K562 (cell line): ENCODE measurements at regions of chr15 and their contacts with region 1.

Region 1: DNA sequence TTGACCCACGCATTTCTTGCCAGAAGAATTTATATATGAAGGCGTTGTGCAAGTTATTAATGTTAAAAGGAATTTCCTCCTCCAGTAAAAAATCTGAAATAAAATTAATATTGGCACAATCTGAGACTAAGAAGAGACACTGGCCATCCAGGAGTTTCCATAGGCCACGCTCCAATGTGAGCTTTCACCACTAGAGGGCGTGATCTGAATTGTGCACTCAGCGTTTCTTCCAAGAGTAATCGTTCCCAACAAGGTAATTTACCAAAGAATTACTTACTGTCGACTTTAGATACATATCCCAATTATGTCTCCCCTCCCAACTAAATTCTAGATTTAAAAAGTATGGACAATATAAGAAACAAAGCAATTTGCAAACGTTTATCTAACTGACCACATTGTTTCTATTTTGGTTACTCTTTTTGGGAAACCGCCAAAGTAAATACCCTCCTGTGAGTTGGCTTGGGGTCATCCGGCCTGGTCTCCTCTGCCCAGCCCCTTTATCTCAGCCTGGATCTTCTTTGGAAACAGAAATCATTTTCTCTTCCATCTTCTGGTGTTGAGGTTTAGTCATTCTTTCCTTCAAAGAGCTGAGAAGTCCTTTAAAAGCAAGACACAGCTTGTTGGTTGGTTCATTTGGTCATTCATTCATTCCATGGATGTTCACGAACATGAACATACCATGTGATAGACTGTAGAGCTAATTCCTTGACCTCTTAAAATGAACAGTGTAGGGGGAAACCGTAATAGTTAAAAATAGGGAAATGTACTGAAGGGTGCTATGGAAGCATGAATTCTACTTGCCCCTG is 26.2 kb downstream of the POLR2M start:
- DNase-seq: peak; percentile 56 to 78 (median 65)
- ATAC-seq: peak; percentile 92
- H3K4me3 ChIP-seq: no peak overlapping the region
- H3K27ac ChIP-seq: no peak overlapping the region; the same call in 2 of the 3 replicates
- H3K4me1 ChIP-seq: peaks cover 0 to 14% of the 10 kb centered on the region in 2 experiments; a peak in 3 of 5 replicates
- H3K27me3 ChIP-seq: no peaks in the 10 kb centered on the region; a peak in 1 of 5 replicates
- CTCF ChIP-seq: peak; percentile 74 to 85 (median 80)
- EP300 ChIP-seq: peak; percentile 59; the same call in 1 of the 2 replicates
- POLR2A ChIP-seq: no peak
- RAD21 ChIP-seq: peak; percentile 44 to 61

Region 2: GRCh38 chr15:57751177-57751800 is 18.6 kb after region 1 on chr15:
- CTCF ChIA-PET with region 1: no interaction called
- POLR2A ChIA-PET with region 1: interaction called, 11 read pairs
- in situ Hi-C with region 1: no loop called
- intact Hi-C with region 1: no loop called
- DNase-seq: peak in 1 of 4 experiments; percentile 23
- ATAC-seq: no peak
- H3K4me3 ChIP-seq: no peak overlapping the region
- H3K27ac ChIP-seq: no peak overlapping the region
- H3K4me1 ChIP-seq: peaks cover 0 to 2% of the 10 kb centered on the region in 2 experiments; a peak in 1 of 5 replicates
- H3K27me3 ChIP-seq: peaks cover 16 to 32% of the 10 kb centered on the region in 2 experiments; a peak in 4 of 5 replicates
- CTCF ChIP-seq: peak; percentile 28 to 56 (median 37); a peak in 2 of 6 replicates
- EP300 ChIP-seq: no peak
- POLR2A ChIP-seq: no peak
- RAD21 ChIP-seq: peak; percentile 52 to 69